Activated T-helper 2 cell treated with anti-CD3 and anti-CD28 coated beads, Interferon-gamma antibody, Interleukin-2, Interleukin-4, amounts not matched to agents 10 μg/mL and 5 μg/mL and 100 μg/mL, durations not matched to agents 14 hours and 24 hours and 36 hours (primary cell): ENCODE measurements at regions of chr5 and their contacts with region 1.

Region 1: DNA sequence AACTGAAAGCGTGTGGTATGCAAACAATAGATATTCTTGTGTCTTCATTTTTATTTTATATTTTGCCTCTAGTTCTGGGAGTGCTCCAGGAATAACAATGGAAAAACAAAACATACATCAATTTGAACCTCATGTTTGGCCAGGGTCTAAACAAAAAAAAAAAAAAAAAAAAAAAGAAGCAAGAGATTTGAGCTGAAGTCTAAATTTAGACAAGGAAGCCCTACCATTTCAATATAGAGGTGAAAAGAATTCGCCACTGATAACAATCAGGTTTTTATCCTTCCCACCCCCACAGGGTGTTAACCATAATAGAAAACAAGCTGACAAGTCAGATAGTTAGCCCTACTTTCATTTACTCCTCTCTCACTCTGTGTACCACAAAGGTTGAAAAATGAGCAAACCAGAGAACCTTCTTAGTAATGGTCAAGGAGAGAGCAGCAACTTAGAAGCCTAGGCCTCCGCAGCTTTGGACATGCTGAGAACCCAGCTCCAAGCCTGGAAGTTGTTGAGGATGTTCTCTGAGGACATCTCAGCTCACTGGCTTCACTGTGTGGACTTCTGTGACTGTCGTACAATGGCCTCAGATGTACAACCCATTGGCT is 118.2 kb upstream of the HMHB1 start:
- DNase-seq: peak; percentile 11
- H3K4me3 Mint-ChIP-seq: no peak overlapping the region
- H3K27ac Mint-ChIP-seq: peak overlapping the region; percentile 68
- H3K4me1 Mint-ChIP-seq: peaks cover 57% of the 10 kb centered on the region
- H3K27me3 Mint-ChIP-seq: no peaks in the 10 kb centered on the region

Region 2: GRCh38 chr5:143051244-143052058 is 642.3 kb before region 1 on chr5:
- intact Hi-C with region 1: loop called (anchors 10 kb)
- DNase-seq: no peak
- H3K4me3 Mint-ChIP-seq: no peak overlapping the region
- H3K27ac Mint-ChIP-seq: no peak overlapping the region
- H3K4me1 Mint-ChIP-seq: peaks cover 62% of the 10 kb centered on the region
- H3K27me3 Mint-ChIP-seq: no peaks in the 10 kb centered on the region

Region 3: DNA sequence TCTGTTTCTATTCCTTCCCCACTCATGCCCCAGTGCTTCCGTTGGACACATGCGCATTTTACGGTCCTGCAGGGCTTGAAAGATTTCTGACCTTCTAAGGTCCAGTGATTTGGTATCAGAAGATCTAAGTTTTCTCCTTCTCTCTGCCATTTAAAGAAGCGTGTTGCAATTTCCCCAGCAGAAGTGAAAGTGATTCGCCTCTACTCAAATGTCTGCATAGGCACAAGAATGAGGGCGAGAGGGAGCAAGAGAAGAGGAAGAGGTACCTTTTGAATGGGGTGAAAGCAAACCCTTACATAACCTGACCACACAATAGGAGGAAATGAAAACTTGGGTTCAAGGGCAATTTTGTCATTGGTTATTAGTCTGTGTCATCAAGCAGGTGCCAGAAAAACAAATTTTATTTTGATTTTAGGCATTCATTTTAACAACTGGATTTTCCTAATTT is 258.5 kb before region 1 on chr5:
- intact Hi-C with region 1: loop called (anchors 5 kb)
- DNase-seq: no peak
- H3K4me3 Mint-ChIP-seq: peak overlapping the region; percentile 80
- H3K27ac Mint-ChIP-seq: peak overlapping the region; percentile 89
- H3K4me1 Mint-ChIP-seq: peaks cover 60% of the 10 kb centered on the region
- H3K27me3 Mint-ChIP-seq: no peaks in the 10 kb centered on the region

Region 4: GRCh38 chr5:143652108-143652700 is 41.5 kb before region 1 on chr5:
- intact Hi-C with region 1: loop called (anchors 1 kb)
- DNase-seq: no peak
- H3K4me3 Mint-ChIP-seq: no peak overlapping the region
- H3K27ac Mint-ChIP-seq: no peak overlapping the region
- H3K4me1 Mint-ChIP-seq: peaks cover 21% of the 10 kb centered on the region
- H3K27me3 Mint-ChIP-seq: peaks cover 2% of the 10 kb centered on the region

Region 5: DNA sequence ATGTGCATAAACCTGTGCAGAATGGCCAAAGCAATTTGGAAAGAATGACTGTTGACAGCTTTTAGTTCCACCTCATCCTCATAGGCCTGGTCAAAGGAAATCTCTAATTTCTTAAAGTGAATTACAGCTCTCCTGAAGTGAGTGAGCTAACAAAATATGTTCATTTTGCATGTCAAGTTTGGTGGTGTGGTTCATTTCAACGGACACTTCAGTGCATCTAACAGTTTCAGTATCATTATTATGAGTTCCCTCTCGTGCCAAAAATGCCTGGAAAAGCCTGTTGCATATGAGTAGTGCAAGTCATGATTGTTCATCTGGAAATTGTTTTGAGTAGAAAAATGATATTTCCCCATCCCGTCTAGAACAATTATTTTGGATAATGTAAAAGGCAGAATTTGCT is 65.0 kb after region 1 on chr5:
- intact Hi-C with region 1: loop called (anchors 10 kb)
- DNase-seq: no peak
- H3K4me3 Mint-ChIP-seq: no peak overlapping the region
- H3K27ac Mint-ChIP-seq: peak overlapping the region; percentile 29
- H3K4me1 Mint-ChIP-seq: peaks cover 24% of the 10 kb centered on the region
- H3K27me3 Mint-ChIP-seq: peaks cover 2% of the 10 kb centered on the region